Dorsolateral prefrontal cortex (tissue), 120 donors: ENCODE measurements at regions of chrX and their contacts with region 1.

Region 1: DNA sequence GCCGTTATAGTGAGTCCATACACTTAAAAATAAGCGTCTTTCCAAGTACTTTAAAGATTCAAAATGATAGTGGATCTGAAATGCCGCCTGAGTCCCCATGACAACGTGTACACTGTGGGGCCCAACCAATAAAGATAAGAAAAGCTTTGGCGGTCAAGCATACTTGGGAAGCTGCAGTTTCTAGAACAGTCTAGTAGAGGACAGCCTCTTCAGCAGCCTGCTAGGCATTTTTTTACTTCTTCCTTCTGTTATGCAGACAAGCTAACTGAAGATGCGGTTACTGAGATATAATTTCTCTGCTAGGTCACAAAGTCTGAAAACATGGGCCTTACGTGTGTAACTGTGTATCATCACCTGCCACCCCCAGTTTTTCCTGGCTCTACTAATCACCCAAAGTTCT is 402 bp upstream of the UPRT start:
- DNase-seq: no peak
- H3K4me3 ChIP-seq: peak overlapping the region; percentile 44 to 83 (median 69)
- H3K27ac ChIP-seq: peak overlapping the region in 58 of 59 donors; percentile 17 to 94 (median 84)
- H3K27me3 ChIP-seq: peaks cover 0 to 17% (median 0%) of the 10 kb centered on the region in 45 donors
- CTCF ChIP-seq: no peak

Region 2: GRCh38 chrX:75156021-75156945 is 117.2 kb before region 1 on chrX and contains the start of gene ABCB7:
- intact Hi-C with region 1: loop called in 1 of 2 experiments (anchors 10 kb)
- DNase-seq: peak in 9 of 10 donors; percentile 41 to 72 (median 63)
- H3K4me3 ChIP-seq: peak within 1 kb of the TSS; percentile 35 to 77 (median 63)
- H3K27ac ChIP-seq: peak within 1 kb of the TSS; percentile 16 to 96 (median 80)
- H3K27me3 ChIP-seq: peaks cover 0 to 20% (median 0%) of the 10 kb centered on the region in 45 donors
- CTCF ChIP-seq: peak in 38 of 56 donors; percentile 14 to 54 (median 32)
- total RNA-seq, gene ABCB7: 15.6 to 34.0 (median 21.5) TPM

Region 3: DNA sequence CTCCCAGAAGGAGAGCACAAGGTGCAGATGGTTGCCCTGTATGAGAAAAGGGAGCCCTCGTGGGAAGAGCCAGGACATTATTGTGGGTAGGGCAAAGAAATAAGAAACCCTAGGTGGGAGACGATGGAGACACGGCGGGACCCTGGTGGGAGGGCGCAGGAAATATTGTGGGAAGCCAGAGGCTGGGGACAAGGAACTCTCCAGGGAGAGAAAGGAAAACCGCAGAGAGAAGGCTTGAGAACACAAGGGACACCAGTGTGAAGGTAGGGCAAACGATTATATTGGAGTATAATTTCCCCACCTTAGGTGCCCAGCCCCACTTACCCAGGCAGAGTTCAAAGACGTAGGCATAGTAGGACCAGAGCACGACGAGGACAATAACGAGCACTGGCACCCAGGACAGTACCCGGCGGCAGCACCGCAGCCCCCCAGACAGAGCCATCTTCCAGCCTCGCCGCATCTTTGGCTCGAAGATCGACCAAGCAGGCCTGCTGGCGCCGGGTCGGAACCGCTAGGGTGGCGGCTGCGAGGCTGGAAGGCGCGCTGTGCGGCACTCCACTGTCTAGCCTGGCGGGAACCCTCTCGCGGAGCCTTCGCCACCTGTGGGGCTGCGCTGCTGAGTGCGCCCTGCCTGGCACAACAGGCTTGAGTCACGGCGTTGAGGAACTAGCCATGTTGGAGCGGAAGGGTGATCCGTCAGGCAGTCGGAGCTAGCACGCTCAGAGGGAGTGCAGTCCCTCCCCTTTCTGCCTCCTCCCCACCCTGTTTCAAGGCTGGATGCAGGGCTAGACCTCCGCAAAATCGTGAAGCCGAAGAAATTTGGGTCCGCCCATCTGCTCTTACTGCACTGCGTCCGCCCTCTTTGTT is 249.3 kb after region 1 on chrX and contains the start of gene ZDHHC15:
- intact Hi-C with region 1: loop called in 1 of 2 experiments (anchors 5 kb)
- DNase-seq: peak; percentile 29 to 76 (median 70)
- H3K4me3 ChIP-seq: peak within 1 kb of the TSS; percentile 34 to 74 (median 58)
- H3K27ac ChIP-seq: peak within 1 kb of the TSS in 44 of 59 donors; percentile 23 to 85 (median 64)
- H3K27me3 ChIP-seq: peaks cover 0 to 12% (median 0%) of the 10 kb centered on the region in 45 donors
- CTCF ChIP-seq: peak in 3 of 56 donors; percentile 5 to 15 (median 12)
- total RNA-seq, gene ZDHHC15: 2.0 to 7.9 (median 4.4) TPM